ENCODE measurements at regions of chr4 and their contacts with region 1.

Region 1: DNA sequence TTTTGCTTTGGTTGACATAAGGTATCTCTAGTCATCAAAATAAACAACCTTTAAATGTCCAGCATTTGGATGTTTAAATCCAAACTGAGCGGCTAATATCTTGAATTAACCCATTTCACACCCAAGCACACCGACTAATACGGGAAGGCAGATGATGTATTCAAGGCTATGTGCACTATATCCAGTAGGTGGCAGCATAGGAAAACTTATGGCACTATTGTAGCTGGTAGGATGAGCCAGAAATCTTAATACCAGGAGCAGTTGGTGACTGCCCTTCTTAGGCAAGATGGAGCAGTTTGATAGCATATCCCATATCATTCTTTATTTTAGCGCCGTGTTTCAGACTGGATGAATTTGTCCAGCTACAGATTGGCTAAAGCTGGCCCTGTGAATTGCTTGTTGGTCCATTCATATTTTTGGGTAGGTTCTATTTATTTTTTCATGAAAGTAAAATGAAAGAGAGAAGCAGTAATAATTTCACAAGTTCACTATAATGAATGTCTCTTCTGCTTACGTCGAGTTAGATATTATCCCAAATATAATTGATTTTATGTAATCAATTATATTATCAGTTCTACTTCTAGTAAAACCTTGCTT is 24.4 kb downstream of the UCHL1 start:
- DNase-seq: no peak

Region 2: DNA sequence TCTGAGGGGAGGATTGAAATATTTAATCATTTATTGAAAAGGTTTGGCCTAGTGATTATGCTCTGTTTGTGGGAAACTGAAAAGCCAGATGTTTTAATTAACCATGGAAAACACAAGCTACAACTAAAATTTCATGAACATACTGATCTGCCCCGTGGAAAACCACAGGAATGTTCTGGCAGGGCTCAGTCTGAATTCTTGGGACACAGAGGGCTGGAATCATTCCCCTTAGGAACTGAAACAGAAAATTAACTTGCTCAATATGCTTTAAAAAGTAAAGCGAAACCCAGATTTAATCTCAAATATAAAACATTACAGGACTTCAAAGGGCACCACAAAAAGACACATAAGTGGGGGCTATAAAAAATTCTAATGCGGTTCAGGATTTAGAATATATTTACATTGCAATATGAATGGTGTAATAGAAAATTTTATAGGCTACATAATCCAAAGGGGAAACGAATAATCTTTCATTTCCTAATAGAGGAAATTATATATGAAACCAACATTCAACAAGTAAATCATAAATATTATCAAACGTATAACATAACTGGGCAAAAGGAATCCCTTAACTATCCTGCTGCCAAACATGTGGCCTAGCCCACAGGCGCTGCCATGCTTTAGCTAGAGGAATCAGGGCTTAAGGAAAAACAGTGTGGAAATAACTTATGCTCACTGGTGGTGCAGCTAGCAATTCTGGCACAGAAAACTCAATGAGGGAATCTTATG is 137.7 kb before region 1 on chr4:
- intact Hi-C with region 1: no loop called
- DNase-seq: no peak

Region 3: DNA sequence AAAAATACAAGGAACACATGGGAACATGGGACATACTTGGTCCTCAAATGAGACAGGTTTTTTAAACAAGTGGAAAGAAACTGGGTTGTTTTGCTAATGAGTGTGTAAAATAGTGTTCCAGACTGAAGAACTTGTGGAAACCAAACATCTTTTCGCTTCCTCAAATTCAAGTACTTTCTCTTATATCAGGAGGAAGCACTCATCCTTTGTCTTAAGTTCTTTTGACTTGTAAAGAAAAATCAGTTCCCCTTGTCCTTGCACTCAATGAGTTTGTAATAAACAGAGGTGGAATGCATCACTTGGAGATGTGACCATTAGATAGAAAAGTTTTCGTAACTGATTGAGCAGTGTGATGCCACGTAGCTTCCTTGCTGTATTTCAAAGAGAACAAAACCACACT is 366.2 kb after region 1 on chr4:
- intact Hi-C with region 1: loop called in 1 of 2 experiments (anchors 5 kb)
- DNase-seq: no peak

Region 4: GRCh38 chr4:41661442-41662076 is 380.4 kb after region 1 on chr4:
- intact Hi-C with region 1: loop called in 1 of 2 experiments (anchors 5 kb)
- DNase-seq: peak; percentile 87

Region 5: DNA sequence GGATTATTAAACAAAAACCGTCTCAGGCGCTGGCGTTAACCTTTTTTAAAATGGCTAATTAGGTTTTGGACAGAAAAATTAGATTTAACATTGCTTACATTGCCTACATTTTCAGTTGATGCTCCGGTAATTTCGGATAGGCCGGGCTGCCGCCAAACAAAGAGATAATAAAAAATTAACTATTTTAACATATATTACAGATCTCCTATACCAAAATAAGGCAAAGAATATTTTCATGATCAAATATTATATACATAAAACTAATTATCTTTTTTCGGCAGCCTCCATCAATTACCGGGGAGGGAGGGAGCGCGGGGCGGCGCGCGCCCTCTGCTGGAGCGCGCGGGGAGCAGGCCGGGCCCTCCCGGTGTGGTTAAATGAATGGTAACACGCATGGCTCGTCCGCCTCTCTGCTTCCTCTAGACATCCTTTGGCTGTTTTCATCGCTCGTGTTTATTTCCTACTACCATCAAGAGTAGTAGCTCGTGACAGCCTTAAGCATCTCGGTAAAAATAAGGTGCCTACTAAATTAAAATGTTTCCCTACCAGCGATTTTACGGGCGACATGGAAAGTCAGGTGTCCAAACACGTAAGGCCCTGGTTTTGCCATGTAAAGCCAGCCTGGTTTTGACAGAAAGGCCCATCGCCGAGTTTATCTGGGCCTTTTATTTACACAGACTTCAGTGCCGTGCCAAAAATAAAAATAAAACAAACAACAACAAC is 601.6 kb after region 1 on chr4:
- intact Hi-C with region 1: loop called in 1 of 2 experiments (anchors 5 kb)
- DNase-seq: peak; percentile 81

Measured in posterior vena cava (tissue), 2 donors.